ENCODE measurements at regions of chr11 and their contacts with region 1.

Region 1: DNA sequence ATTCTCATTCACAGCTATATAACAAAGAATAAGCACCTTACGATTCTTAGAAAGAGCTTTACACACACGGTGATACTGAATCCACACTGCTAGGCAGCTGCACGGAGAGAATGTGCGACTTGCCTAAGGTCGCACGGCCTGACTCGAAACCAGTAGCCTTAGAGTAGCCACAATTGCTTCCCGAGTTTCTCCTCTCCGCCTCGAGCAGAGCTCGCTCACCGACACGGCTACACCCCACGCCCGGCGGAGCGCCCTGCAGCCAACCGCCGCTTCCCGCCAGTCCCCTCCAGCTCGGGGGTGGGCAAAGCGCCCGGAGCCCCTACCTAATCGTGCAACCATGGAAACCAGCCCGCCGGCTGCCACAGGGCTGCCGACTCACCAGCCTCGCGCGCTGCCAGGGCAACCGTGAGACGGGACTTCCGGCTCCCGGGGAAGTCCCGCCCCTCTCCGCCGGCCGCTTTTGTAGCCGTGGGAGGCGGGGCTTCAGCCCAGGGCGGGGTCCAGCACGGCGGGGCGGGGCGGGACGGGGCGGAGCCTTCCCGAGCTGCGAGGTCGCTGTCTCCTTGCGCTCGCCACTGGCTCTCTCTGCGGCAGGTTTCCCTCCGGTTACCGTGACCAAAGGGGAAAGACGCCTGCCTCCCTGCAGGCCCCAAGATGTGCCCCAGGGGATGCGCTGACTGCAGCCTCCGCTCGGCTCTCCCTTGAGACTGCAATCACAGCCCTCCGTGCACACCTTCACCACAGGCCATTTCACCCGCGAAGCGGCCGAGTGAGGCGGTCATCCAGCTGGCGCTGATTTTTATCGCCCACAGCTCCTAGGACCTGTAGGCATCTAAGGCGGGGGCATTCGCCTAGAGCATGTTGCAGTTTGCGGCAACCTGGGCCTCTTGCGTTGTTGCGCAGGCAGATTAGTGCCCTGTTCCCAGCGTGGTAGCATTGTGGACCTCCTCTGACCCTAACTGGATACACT is 1.1 kb downstream of the BSCL2 start:
- DNase-seq: peak; percentile 95
- ATAC-seq: peak; percentile 43
- H3K4me3 Mint-ChIP-seq: peak overlapping the region; percentile 91
- H3K27ac Mint-ChIP-seq: peak overlapping the region; percentile 73
- H3K4me1 Mint-ChIP-seq: peaks cover 39% of the 10 kb centered on the region
- H3K27me3 Mint-ChIP-seq: no peaks in the 10 kb centered on the region

Region 2: GRCh38 chr11:62573592-62574362 is 132.4 kb before region 1 on chr11 and contains the start of gene EEF1G:
- POLR2A ChIA-PET with region 1: interaction called, 10 read pairs
- DNase-seq: peak; percentile 94
- ATAC-seq: peak; percentile 95
- H3K4me3 Mint-ChIP-seq: peak within 1 kb of the TSS; percentile 99
- H3K27ac Mint-ChIP-seq: peak within 1 kb of the TSS; percentile 95
- H3K4me1 Mint-ChIP-seq: peaks cover 41% of the 10 kb centered on the region
- H3K27me3 Mint-ChIP-seq: no peaks in the 10 kb centered on the region
- total RNA-seq, gene EEF1G: 1,132 to 1,152 TPM

Measured in activated naive CD8-positive, alpha-beta T cell treated with anti-CD3 and anti-CD28 coated beads, Interleukin-2, amount 10 ng/mL, durations not matched to agents 7 days and 5 days (primary cell).